ENCODE measurements at regions of chr11 and their contacts with region 1.

Region 1: GRCh38 chr11:9748361-9748970 is 84.6 kb downstream of the SWAP70 start:
- DNase-seq: peak; percentile 88
- H3K4me3 ChIP-seq: peak overlapping the region; percentile 26
- H3K27ac ChIP-seq: peak overlapping the region; percentile 96
- H3K4me1 ChIP-seq: peaks cover 75% of the 10 kb centered on the region
- CTCF ChIP-seq: peak; percentile 94

Region 2: GRCh38 chr11:9534791-9535781 is 213.4 kb before region 1 on chr11:
- CTCF ChIA-PET with region 1: interaction called, 5 read pairs
- POLR2A ChIA-PET with region 1: interaction called, 6 read pairs
- intact Hi-C with region 1: loop called (anchors 1 kb)
- DNase-seq: peak; percentile 81
- H3K4me3 ChIP-seq: no peak overlapping the region
- H3K27ac ChIP-seq: no peak overlapping the region
- H3K4me1 ChIP-seq: peaks cover 12% of the 10 kb centered on the region
- CTCF ChIP-seq: peak; percentile 100

Region 3: DNA sequence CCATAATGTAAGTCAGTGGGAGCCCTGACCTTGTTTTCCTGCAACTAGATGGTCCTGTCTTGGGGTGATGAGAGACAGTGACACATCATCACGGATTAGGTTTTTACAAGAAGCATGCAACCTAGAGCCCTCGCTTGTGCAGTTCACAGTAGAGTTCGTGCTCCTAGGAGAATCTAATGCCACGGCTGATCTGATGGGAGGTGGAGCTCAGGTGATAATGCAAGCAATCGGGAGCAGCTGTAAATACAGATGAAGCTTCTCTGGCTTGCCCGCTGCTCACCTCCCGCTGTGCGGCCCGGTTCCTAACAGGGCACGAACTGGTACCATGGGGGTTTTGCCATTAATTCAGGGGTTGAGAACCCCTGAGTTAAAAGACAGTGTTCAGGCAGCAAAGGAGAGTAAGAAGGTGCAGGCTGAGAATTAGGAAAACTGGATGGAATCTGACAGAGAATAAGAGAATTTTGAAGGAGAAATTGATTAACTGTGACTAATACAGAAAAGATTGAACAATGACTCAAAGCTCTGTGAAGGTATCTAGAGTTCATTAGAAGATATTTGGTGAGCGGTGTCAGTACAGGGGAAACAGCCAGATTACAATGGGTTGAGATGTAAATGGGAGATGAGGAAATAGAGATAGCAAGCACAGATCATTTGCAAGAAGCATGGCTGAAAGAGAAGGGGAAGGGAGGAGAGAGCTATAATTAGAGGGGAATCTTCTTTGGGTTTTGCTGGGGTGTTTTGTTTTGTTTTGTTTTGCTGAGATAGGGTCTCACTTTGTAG is 154.0 kb before region 1 on chr11:
- CTCF ChIA-PET with region 1: no interaction called
- POLR2A ChIA-PET with region 1: interaction called, 30 read pairs
- intact Hi-C with region 1: loop called (anchors 5 kb)
- DNase-seq: peak; percentile 46
- H3K4me3 ChIP-seq: peak overlapping the region; percentile 61
- H3K27ac ChIP-seq: peak overlapping the region; percentile 95
- H3K4me1 ChIP-seq: peaks cover 71% of the 10 kb centered on the region
- CTCF ChIP-seq: no peak

Region 4: DNA sequence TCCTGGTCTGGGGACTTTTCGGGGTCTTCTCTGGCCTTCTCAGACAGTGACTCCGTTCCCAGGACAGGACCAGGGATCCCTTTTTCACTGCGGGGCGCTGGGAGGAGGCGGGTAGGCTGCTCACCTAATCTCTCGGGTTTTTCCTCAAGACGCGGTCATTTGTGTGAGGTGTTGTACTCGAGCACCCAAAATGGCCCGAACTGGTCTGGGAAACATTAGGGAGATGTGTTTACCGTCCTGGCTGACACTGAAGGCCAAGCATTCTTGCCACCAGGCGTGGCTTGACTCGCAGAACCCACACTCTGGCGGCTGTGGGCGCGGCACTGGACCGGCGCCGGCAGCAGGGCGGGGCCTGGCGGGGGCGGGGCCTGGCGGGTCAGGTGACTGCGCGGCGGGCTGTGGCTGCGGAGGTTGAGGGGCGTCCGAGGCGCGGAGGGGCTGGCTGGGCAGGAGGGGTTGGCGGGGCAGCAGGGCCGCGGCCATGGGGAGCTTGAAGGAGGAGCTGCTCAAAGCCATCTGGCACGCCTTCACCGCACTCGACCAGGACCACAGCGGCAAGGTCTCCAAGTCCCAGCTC is 84.7 kb before region 1 on chr11 and contains the start of gene SWAP70:
- CTCF ChIA-PET with region 1: interaction called, 3 read pairs
- POLR2A ChIA-PET with region 1: interaction called, 3 read pairs
- intact Hi-C with region 1: loop called (anchors 2 kb)
- DNase-seq: peak; percentile 90
- H3K4me3 ChIP-seq: peak within 1 kb of the TSS; percentile 82
- H3K27ac ChIP-seq: peak within 1 kb of the TSS; percentile 76
- H3K4me1 ChIP-seq: peaks cover 36% of the 10 kb centered on the region
- CTCF ChIP-seq: no peak
- total RNA-seq, gene SWAP70: 37.5 and 44.4 TPM in 2 replicates

Region 5: GRCh38 chr11:9688716-9689511 is 59.6 kb before region 1 on chr11:
- CTCF ChIA-PET with region 1: interaction called, 3 read pairs
- POLR2A ChIA-PET with region 1: interaction called, 53 read pairs
- intact Hi-C with region 1: loop called (anchors 2 kb)
- DNase-seq: peak; percentile 87
- H3K4me3 ChIP-seq: peak overlapping the region; percentile 51
- H3K27ac ChIP-seq: peak overlapping the region; percentile 96
- H3K4me1 ChIP-seq: peaks cover 99% of the 10 kb centered on the region
- CTCF ChIP-seq: no peak

Region 6: DNA sequence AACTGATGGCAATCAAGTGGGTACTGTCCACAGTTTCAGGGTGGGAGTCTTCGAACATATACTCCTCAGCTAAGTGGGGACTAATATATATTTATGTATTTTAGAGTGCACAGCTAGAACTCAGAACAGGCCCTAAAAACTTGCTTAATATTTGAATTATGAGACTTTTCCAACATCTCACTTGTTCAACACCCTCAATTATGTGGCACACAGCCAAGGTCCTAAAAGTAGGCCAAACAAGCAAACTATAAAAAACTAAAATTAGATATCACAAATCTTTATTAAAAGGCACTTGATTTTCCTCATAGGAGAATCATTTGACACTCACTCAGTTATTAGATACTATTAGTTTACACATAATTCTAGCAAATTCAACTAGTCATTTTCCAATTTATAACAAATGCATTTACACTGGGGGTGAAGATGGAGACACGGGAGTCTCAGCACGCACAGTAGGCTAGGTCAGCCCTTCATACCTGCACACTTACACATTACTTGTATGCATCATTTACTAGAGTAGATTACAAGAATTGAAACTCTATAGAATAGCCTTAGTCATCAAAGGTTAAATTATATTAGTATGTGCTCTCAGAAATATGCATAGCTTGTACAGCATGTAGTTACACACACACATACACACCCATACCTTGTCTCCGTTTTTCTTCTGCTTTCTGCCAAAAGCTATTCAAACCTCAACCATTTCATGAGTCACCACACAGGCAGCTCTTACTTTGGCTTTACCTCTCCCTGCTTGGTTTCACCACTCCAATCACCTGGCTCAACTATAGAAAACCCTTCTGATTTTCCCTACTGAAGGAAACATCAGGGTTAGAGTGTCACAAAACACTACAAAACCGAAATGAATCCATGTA is 374.1 kb after region 1 on chr11:
- CTCF ChIA-PET with region 1: no interaction called
- POLR2A ChIA-PET with region 1: no interaction called
- intact Hi-C with region 1: no loop called
- DNase-seq: no peak
- H3K4me3 ChIP-seq: no peak overlapping the region
- H3K27ac ChIP-seq: no peak overlapping the region
- H3K4me1 ChIP-seq: no peaks in the 10 kb centered on the region
- CTCF ChIP-seq: no peak

Measured in OCI-LY7 (cell line).